K562 (cell line): ENCODE measurements at regions of chr19 and their contacts with region 1.

Region 1: DNA sequence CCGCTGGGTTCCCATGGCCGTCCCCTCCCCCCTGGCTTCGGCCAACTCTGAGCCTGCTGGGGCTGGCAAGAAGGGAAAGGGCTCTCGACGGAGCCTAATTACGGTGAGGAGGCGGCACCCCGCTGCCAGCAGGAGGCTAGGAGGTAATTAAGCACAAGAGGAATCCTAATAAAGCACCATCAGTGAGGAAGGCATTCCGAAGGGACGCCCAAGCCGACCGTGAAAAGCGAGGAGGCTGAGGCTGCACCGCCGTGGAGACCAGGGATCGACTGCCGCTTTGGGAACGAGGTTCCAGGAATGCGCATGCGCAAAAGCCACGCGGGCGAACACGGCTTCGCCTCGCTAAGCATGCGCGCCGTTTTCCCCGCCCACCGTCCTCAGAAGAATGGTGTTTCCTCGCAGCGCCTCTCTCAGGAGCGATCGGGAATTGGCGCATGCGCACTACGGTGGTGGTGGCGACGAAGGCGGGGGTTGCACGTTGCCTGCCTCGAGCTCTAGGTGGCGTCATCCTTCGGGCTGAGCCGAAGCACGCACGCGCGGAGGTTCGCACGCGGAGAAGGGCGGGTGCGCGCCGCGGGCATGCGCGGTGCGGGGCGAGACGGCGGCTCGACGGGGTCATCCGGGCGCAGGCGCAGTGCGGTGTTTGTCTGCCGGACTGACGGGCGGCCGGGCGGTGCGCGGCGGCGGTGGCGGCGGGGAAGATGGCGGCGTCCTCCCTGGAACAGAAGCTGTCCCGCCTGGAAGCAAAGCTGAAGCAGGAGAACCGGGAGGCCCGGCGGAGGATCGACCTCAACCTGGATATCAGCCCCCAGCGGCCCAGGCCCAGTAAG is at the start of gene MAP2K7:
- DNase-seq: peak; percentile 96 to 99 (median 98)
- ATAC-seq: peak; percentile 82
- H3K4me3 ChIP-seq: peak within 1 kb of the TSS; percentile 96
- H3K27ac ChIP-seq: peak within 1 kb of the TSS; percentile 96
- H3K4me1 ChIP-seq: peaks cover 13 to 67% of the 10 kb centered on the region in 2 experiments; a peak in 4 of 5 replicates
- H3K27me3 ChIP-seq: no peaks in the 10 kb centered on the region
- CTCF ChIP-seq: peak; percentile 87 to 97 (median 96)
- EP300 ChIP-seq: no peak
- POLR2A ChIP-seq: peak; percentile 97
- RAD21 ChIP-seq: peak; percentile 58 to 63
- polyA plus RNA-seq, gene MAP2K7: 0.51 to 0.99 TPM

Region 2: GRCh38 chr19:7819337-7819736 is 84.1 kb before region 1 on chr19:
- CTCF ChIA-PET with region 1: no interaction called
- POLR2A ChIA-PET with region 1: no interaction called
- in situ Hi-C with region 1: no loop called
- intact Hi-C with region 1: no loop called
- DNase-seq: no peak
- ATAC-seq: no peak
- H3K4me3 ChIP-seq: no peak overlapping the region
- H3K27ac ChIP-seq: no peak overlapping the region
- H3K4me1 ChIP-seq: no peaks in the 10 kb centered on the region
- H3K27me3 ChIP-seq: peaks cover 0 to 3% of the 10 kb centered on the region in 2 experiments; a peak in 2 of 5 replicates
- CTCF ChIP-seq: no peak
- EP300 ChIP-seq: no peak
- POLR2A ChIP-seq: no peak
- RAD21 ChIP-seq: no peak

Region 3: GRCh38 chr19:7852851-7853769 is 50.3 kb before region 1 on chr19:
- CTCF ChIA-PET with region 1: interaction called, 3 read pairs
- POLR2A ChIA-PET with region 1: interaction called, 3 read pairs
- in situ Hi-C with region 1: no loop called
- intact Hi-C with region 1: loop called (anchors 2 kb)
- DNase-seq: peak; percentile 91 to 97 (median 94)
- ATAC-seq: peak; percentile 92
- H3K4me3 ChIP-seq: no peak overlapping the region
- H3K27ac ChIP-seq: no peak overlapping the region
- H3K4me1 ChIP-seq: peaks cover 13 to 74% of the 10 kb centered on the region in 2 experiments
- H3K27me3 ChIP-seq: peaks cover 15 to 37% of the 10 kb centered on the region in 2 experiments; a peak in 4 of 5 replicates
- CTCF ChIP-seq: peak; percentile 83 to 90 (median 86); a peak in 5 of 6 replicates
- EP300 ChIP-seq: no peak
- POLR2A ChIP-seq: no peak
- RAD21 ChIP-seq: peak; percentile 68 to 85

Region 4: DNA sequence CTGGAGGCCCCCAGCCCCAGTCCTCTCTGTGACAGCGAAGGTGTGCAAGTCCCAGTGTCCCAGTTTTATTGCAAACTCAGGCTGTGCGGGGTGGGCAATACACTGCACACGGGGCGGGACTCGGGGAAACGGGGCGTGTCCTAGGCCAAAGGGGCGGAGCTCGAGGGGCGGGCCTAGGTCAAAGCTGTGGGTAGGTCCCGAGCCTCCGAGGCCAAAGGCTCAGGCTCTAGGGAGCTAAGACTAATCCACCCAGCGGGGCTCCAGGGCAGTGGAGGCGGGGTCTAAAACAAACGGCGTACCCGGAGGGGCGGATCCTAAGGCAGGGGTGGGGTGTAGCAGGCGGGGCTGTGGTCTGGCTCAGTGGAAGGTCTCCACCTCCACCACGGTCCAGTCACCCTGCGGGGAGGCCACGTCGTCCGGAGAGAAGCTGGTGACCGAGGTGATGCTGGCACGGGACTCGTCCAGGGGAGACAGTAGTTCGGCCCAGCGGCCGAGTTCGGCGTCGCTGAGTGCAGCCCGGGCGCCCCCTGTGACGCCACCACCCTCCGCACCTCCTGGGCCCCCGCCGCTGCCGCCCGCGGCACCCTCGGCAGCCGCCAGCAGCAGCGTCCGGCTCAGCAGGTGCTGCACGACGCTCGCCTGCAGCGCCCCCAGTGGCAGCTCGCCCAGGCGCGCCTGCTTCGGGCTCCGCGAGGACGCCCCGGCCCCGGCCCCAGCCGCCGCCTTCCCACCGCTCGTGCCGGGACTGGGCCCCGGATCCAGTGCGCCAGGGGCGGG is 34.6 kb before region 1 on chr19:
- CTCF ChIA-PET with region 1: interaction called, 3 read pairs
- POLR2A ChIA-PET with region 1: interaction called, 6 read pairs
- in situ Hi-C with region 1: no loop called
- intact Hi-C with region 1: loop called (anchors 2 kb)
- DNase-seq: peak; percentile 78 to 94 (median 85)
- ATAC-seq: peak; percentile 68
- H3K4me3 ChIP-seq: peak overlapping the region; percentile 75
- H3K27ac ChIP-seq: peak overlapping the region; percentile 71
- H3K4me1 ChIP-seq: peaks cover 15 to 89% of the 10 kb centered on the region in 2 experiments; a peak in 4 of 5 replicates
- H3K27me3 ChIP-seq: no peaks in the 10 kb centered on the region; a peak in 1 of 5 replicates
- CTCF ChIP-seq: peak; percentile 56 to 94 (median 76)
- EP300 ChIP-seq: no peak
- POLR2A ChIP-seq: no peak; the same call in 1 of the 2 replicates
- RAD21 ChIP-seq: peak in 1 of 2 experiments; percentile 49; a peak in 3 of 4 replicates

Region 5: DNA sequence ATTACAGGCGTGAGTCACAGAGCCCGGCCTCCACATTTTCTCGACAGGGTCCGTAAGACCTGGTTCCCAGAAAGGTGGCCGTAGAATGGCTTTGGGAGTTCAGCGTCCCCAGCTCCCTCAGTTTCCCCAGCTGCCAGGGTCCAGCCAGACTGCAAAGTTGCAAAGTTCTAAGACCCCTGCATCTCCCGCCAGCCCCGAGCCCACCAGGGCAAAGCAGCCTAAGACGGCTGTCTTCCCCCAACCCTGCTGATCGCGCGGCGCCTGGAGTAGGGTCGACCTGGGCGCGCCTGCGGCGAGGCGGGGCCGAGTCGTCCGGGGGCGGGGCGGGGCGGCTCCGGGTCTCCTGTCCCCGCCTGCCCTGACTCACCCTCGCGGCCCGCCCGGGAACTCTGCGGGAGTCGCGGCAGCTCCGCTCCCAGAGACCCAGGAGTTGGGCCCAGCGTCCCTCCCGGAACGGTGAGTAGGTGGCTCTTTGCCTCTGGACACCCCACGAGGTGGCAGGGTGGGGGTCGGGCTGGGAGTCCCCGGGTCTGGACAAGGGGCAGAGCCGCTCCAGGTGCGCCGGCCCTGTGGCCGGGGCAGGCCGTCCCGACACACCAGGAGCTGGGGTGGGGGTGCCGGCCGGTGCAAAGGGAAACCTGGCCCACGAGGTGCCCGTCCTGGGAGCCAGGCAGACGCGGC is 15.2 kb before region 1 on chr19 and contains the start of gene LRRC8E:
- CTCF ChIA-PET with region 1: no interaction called
- POLR2A ChIA-PET with region 1: interaction called, 72 read pairs
- in situ Hi-C with region 1: no loop called
- intact Hi-C with region 1: no loop called
- DNase-seq: peak; percentile 89 to 91 (median 90)
- ATAC-seq: peak; percentile 99
- H3K4me3 ChIP-seq: peak within 1 kb of the TSS; percentile 65
- H3K27ac ChIP-seq: peak within 1 kb of the TSS; percentile 61; the same call in 2 of the 3 replicates
- H3K4me1 ChIP-seq: peaks cover 10 to 35% of the 10 kb centered on the region in 2 experiments
- H3K27me3 ChIP-seq: no peaks in the 10 kb centered on the region
- CTCF ChIP-seq: 0 out of 6 replicates have a peak, but pooled peaks of 1 of the 3 experiments have one; percentile 0
- EP300 ChIP-seq: no peak
- POLR2A ChIP-seq: peak; percentile 82
- RAD21 ChIP-seq: no peak
- polyA plus RNA-seq, gene LRRC8E: 0.08 TPM in 1 of 2 experiments, not detected in the other

Region 6: DNA sequence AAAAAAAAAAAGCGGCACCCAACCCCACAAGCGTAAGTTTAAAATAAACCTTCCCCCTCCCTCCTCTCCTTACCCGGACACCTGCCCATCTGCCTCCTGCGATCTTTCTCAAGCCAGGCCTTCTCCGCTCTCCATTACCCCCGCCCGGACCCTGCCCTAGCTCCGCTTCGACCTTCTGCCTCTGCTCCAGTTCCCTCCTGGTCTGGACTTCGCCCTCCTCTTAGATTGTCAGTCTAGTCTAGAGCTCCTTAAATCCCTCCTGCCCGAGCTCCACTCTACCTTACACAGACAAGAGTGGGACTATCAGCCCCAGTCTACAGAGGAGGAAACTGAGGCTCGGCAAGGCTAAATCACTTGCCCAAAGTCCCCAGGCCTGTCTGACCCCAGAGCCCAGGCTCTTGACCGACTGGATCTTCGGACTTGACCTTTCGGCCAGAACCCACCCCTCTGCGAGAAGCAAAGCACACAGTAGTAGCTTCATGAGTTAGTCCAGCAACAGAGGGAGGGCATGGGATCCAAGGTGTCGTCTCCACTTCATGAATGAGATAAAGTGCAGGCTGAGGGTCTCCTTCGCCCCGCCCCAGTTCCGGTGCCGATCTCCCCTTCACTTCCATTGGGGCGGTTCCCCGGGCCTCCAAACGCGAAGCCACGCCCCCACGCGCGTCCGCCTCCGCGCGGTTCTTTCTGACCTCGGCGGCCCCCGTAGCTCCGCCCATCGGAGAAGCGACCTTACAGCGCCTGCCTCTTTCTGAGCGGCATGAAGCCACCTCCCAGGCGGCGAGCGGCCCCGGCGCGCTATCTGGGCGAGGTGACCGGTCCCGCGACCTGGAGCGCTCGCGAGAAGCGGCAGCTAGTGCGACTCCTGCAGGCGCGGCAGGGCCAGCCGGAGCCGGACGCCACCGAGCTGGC is 16.4 kb after region 1 on chr19 and contains the start of gene SNAPC2:
- CTCF ChIA-PET with region 1: no interaction called
- POLR2A ChIA-PET with region 1: interaction called, 26 read pairs
- in situ Hi-C with region 1: no loop called
- intact Hi-C with region 1: no loop called
- DNase-seq: peak; percentile 81 to 99 (median 85)
- ATAC-seq: peak; percentile 86
- H3K4me3 ChIP-seq: peak within 1 kb of the TSS; percentile 81
- H3K27ac ChIP-seq: peak within 1 kb of the TSS; percentile 89
- H3K4me1 ChIP-seq: peaks cover 9 to 73% of the 10 kb centered on the region in 2 experiments
- H3K27me3 ChIP-seq: no peaks in the 10 kb centered on the region
- CTCF ChIP-seq: peak in 2 of 3 experiments; percentile 5 to 21; a peak in 2 of 6 replicates
- EP300 ChIP-seq: no peak
- POLR2A ChIP-seq: peak; percentile 81
- RAD21 ChIP-seq: no peak
- polyA plus RNA-seq, gene SNAPC2: 0.59 to 1.4 TPM